Gastrocnemius medialis (tissue), 4 donors: ENCODE measurements at regions of chr6 and their contacts with region 1.

Region 1: DNA sequence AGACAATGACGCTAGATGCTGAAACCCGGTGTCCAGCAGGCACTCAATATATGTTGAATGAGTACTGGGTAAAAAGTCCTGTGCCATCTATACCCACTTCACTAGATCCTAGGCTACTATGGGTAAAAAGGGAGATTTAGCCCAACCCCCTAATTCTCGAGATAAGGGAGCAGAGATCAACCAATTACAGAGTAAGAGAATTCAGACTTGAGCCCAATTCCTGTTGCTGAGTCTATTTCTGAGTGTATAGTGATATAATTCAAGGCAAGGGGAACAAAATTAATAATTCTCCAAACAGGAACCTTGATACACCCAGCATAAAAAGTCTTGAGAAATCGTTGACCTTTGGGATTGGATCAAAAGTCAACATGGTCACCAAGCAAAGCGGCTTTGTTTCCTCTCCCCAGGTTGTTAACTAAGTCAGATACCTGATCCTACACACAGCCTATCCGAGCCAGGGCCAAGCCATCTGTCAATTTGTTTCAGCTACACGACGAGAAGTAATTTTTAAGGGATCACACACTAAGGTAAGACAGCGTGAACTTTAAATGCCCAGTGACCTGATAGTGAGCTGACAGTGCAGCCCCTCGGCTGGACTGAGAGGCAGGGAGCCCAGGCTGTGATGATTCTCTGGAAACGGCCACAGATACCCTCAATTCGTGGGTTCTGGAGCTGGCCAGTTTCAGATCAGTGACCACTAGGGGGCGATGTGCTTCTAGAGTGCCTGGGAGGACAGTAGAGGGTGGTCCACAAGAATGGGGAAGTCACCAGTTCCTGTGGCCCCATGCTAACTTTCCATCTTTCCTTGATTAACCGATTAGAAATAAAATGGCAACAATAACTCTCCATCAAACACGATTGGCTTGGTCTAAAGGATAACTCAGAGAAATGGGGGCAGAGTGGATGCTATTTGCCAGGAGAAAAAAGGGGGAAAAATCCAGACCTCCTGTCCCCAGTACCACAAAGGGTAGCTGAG is 46.2 kb downstream of the SLC22A23 start:
- DNase-seq: peak in 1 of 2 donors; percentile 18
- ATAC-seq: no peak
- H3K4me3 ChIP-seq: no peak overlapping the region
- H3K27ac ChIP-seq: no peak overlapping the region
- H3K4me1 ChIP-seq: peaks cover 13 to 15% of the 10 kb centered on the region in 2 donors
- H3K27me3 ChIP-seq: no peaks in the 10 kb centered on the region
- CTCF ChIP-seq: peak; percentile 32 to 73 (median 65)
- POLR2A ChIP-seq: no peak

Region 2: DNA sequence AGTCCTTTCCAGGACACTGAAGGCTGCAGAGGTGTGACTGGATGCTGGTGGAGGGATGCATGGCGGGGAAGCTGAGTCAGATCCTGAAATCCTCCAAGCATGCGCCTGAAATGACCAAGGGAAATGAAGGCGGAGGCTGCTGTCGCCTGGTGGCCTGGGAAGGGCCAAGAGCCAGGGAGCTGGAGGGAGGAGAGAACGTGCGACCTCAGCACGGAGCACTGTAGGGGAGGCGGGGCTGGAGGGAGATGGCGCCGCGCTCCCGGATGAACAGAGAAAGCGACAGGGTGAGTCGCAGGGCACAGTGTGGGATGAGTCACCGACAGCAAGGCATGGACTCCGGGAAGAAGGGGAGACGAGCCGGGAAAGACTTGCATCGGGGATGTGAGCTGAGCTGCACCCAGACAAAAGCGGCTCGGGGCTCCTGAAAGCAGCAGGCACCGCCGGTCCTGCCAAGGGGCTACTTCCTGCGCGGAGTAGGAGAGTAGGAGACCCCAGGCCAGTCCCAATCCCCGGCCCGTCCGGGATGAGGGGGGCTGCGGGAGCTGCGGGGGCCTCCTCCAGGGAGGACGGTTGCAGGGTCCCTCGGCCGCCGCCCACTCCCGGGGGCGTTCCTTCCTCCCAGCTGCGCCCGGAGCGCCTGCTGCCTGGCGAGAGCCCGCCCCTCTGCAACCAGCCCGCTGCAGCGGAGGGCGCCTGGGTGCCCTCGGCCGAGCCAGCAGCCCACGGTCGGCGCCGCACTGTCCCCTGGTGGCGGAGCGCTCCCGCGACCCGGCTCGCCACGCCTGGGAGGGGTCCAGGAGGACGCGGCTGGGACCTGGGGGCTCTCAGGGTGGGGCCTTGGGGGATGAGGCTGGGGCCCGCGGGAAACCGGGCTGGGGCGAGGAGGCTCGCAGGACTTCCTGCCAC is 422.0 kb before region 1 on chr6:
- in situ Hi-C with region 1: no loop called
- intact Hi-C with region 1: no loop called
- DNase-seq: peak; percentile 85 to 88
- ATAC-seq: peak; percentile 73 to 82
- H3K4me3 ChIP-seq: peak overlapping the region; percentile 58 to 84 (median 84)
- H3K27ac ChIP-seq: peak overlapping the region; percentile 80 to 95 (median 94)
- H3K4me1 ChIP-seq: peaks cover 7 to 19% of the 10 kb centered on the region in 2 donors
- H3K27me3 ChIP-seq: no peaks in the 10 kb centered on the region
- CTCF ChIP-seq: peak in 4 of 5 experiments; percentile 86 to 99 (median 94)
- POLR2A ChIP-seq: peak; percentile 46 to 69

Region 3: DNA sequence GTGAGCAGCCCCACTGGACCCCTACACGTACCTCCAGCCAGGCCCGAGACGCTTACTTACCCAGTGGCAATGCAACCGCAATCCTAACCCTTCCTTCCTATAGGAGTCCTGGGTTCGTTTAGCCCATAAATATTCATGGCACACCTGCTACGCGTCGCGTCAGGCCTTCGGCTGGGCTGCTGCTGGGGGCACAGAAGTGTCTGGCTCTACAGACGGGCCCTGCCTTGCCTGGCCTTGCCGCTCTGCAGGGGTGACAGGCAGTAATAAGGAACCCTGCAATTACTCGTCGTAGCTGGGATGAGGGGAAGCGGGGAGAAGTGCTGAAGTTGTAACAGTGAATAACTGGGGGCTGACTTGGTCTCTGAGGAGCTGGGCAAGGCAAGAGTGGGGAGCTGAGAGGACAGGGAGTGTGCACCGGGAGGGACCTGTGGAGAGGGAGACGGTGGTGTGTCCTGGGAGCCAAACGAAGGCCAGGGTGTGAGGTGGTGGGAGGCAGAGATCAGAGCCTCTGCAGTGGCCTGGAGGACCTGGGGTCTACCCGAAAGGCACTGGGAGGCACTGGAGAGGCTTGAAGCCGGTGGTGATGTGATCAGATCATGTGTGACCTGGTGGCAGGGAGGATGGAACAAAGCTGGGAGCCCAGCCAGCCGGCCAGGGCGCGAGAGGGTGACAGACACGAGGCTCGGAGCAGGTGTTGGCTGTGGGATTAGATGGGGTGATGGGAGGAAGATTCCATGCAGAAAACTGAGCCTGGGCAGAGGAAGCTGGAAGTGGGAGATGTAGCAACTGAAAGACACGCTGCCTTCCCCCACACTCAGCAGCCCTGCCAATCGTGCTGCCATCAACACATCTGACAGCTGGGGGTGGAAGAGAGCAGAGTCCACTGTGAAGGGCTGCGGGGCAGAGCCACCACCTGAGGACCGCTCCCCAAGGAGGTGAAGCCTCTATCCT is 115.5 kb before region 1 on chr6:
- in situ Hi-C with region 1: no loop called
- intact Hi-C with region 1: loop called (anchors 5 kb)
- DNase-seq: peak; percentile 91 to 93
- ATAC-seq: peak; percentile 96 to 97
- H3K4me3 ChIP-seq: no peak overlapping the region
- H3K27ac ChIP-seq: peak overlapping the region; percentile 56 to 72 (median 63)
- H3K4me1 ChIP-seq: peaks cover 7 to 12% of the 10 kb centered on the region in 2 donors
- H3K27me3 ChIP-seq: no peaks in the 10 kb centered on the region
- CTCF ChIP-seq: peak; percentile 44 to 61 (median 51)
- POLR2A ChIP-seq: no peak

Region 4: DNA sequence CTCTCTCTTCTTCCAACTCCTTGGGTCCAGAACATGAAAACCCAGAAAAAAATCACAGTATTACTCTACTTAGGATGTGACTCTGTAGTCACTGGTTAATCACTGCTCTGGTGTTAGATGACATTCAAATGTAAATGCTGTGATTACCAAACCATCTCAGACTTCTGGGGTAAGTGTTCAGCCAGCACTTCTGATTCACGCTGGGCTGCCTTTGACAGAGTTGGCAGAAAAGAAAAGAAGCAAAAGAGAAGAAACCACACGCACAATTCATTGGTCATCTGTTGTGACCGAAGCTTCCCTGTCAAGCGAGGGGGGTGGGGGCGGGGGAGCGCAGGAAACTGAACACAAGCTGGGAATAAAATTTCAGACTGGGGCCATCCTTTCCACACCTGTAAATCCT is 69.2 kb before region 1 on chr6:
- in situ Hi-C with region 1: no loop called
- intact Hi-C with region 1: loop called (anchors 5 kb)
- DNase-seq: peak; percentile 55 to 61
- ATAC-seq: peak; percentile 59 to 77
- H3K4me3 ChIP-seq: no peak overlapping the region
- H3K27ac ChIP-seq: peak overlapping the region; percentile 73 to 80 (median 77)
- H3K4me1 ChIP-seq: peaks cover 52 to 58% of the 10 kb centered on the region in 2 donors
- H3K27me3 ChIP-seq: no peaks in the 10 kb centered on the region
- CTCF ChIP-seq: no peak
- POLR2A ChIP-seq: peak in 1 of 2 donors; percentile 24

Region 5: DNA sequence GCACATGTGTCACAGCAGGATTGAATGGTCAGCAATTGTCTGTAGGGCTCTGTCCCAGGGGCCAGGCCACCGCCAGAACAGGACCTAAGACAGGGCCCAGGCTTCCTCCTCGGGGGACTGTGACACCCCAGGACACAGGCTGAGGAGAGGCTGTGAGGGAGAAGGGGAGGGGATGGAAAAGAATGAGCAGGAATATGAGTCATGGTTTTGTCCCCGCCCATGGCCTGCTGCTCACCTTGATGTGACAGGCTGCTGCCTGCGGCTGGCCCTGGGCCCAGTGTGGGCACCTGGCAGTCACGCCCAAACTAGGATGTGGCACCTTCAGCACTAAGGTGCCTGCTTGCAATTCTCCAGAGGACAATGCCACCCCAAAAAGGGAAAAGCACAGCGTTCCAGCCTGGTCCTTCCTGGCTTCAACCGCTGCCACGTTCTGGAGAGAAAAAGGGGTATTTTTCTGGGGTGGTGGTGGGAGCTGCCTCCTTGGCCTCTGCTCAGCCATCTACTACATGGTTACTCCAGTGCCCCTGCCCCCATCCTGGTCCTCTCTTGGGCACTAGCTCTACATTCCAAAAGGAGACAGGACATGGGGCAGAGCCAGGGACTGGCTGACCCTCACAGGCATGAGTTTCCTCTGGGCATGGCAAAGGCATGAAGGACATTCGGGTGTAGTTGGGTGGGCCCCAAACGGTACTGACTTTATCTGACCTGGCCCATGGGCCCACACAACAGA is 47.2 kb before region 1 on chr6:
- in situ Hi-C with region 1: no loop called
- intact Hi-C with region 1: loop called (anchors 5 kb)
- DNase-seq: no peak
- ATAC-seq: no peak
- H3K4me3 ChIP-seq: no peak overlapping the region
- H3K27ac ChIP-seq: no peak overlapping the region
- H3K4me1 ChIP-seq: no peaks in the 10 kb centered on the region
- H3K27me3 ChIP-seq: no peaks in the 10 kb centered on the region
- CTCF ChIP-seq: no peak
- POLR2A ChIP-seq: no peak

Region 6: DNA sequence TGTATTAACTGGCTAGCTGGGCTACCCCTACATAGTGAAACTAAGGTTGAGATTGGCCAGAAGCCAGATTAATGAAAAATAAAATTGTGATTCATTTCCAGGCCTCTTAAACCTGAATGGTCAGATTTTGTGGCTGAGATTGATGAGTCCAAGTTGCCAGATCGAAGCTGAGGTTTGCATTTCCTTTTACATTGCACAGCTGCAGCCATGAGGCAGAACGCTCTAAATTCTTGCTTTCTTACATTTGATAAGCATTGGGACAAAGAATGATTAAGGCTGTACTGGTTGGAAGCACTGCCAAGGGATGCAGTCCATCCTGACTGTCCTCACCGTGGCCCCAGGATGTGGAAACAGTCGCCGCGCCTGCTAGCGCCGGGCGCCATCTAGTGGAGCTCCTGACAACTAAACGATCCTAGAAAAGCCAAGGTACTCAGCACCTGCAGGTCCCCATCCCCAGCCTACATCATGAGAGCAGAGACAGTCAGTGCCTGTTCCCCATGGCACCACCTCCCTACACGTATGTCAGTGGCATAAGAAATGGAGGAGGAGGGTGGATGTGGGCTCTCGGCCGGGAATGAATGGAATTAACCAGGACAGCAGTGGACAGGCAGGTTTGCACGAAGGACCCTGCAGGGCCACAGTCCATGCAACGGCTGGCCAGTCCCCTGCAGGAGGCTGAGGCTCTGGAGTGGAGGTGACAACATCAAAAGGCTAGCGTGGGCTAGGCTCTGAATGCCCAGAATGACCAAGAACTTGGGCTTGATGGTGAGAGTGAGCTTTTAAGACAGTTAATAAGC is 321.9 kb after region 1 on chr6:
- in situ Hi-C with region 1: loop called in 1 of 4 experiments (anchors 10 kb)
- intact Hi-C with region 1: no loop called
- DNase-seq: peak; percentile 47 to 66
- ATAC-seq: peak; percentile 75 to 90
- H3K4me3 ChIP-seq: no peak overlapping the region
- H3K27ac ChIP-seq: no peak overlapping the region
- H3K4me1 ChIP-seq: no peaks in the 10 kb centered on the region
- H3K27me3 ChIP-seq: no peaks in the 10 kb centered on the region
- CTCF ChIP-seq: peak; percentile 67 to 92 (median 83)
- POLR2A ChIP-seq: no peak